ENCODE measurements at regions of chr10 and their contacts with region 1.

Region 1: DNA sequence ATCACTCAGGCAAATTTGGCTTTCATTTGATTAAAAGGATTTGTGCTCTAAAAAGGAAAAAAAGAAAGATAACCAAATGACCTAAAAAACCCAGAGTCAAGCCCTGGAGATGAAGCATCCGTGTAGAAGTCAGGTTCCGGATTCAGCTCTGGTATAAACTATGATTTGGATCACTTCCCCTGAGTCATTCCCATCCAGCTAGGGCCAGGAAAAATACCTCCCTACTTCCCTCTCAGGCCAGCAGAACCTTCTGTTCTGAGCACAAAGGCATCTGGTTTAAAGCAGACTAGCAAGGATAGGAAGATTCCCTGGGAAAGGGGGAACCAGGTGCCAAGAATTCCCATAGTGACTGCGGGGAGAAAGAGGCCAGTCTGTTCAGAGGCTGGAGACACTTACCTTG is 25.7 kb upstream of the NDST2 start:
- DNase-seq: no peak
- H3K4me3 ChIP-seq: no peak overlapping the region
- H3K27ac ChIP-seq: no peak overlapping the region
- H3K4me1 ChIP-seq: no peaks in the 10 kb centered on the region
- H3K27me3 ChIP-seq: no peaks in the 10 kb centered on the region
- CTCF ChIP-seq: no peak
- POLR2A ChIP-seq: no peak

Region 2: GRCh38 chr10:73232887-73233286 is 604.2 kb before region 1 on chr10:
- intact Hi-C with region 1: no loop called
- DNase-seq: no peak
- H3K4me3 ChIP-seq: no peak overlapping the region
- H3K27ac ChIP-seq: no peak overlapping the region
- H3K4me1 ChIP-seq: peaks cover 0 to 9% (median 0%) of the 10 kb centered on the region in 6 donors
- H3K27me3 ChIP-seq: no peaks in the 10 kb centered on the region
- CTCF ChIP-seq: no peak
- POLR2A ChIP-seq: no peak

Region 3: DNA sequence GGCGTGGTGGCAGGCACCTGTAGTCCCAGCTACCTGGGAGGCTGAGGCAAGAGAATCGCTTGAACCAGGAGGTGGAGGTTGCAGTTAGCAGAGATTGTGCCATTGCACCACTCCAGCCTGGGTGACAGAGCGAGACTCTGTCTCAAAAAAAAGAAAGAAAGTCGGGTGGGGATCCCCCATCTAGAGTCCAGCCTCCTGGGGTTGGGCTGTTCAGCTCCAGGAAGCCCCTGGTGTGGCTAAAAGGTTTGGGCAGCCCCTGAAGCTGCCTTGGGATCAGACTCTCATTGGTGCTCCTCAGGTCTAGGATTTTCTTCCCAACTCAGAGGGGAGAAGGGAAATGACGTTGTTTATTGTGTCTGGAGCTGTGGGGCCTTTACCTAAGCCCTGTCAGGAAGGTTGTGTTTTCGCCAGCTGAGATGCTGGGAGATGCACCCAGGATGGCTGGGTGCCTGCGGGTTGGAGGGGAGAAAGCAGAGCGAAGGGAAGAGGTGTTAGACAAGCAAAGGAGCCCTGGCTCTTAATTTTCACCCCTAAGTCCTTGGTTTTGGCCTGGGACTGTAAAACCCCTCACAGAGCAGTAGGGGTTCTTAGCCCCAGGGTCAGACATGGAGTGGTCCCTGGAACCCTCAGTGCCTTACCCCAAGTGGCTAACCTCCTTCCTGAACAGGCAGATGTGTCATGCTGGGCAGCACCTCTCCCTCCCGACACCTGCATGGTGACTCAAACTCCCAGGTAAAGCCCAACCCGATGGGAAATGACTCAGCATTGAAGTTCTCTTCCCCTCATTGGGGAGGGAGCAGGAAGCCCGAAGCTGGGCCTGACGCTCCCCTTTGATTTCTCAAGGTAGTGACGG is 94.9 kb after region 1 on chr10:
- intact Hi-C with region 1: loop called (anchors 10 kb)
- DNase-seq: no peak
- H3K4me3 ChIP-seq: peak overlapping the region in 1 of 8 donors; percentile 30
- H3K27ac ChIP-seq: peak overlapping the region in 6 of 8 donors; percentile 28 to 81 (median 54)
- H3K4me1 ChIP-seq: peaks cover 0 to 26% (median 6%) of the 10 kb centered on the region in 6 donors
- H3K27me3 ChIP-seq: no peaks in the 10 kb centered on the region
- CTCF ChIP-seq: no peak
- POLR2A ChIP-seq: no peak